CD8-positive, alpha-beta T cell (primary cell): ENCODE measurements at regions of chr16 and their contacts with region 1.

Region 1: GRCh38 chr16:31754998-31755615 is 118.5 kb upstream of the ZNF267 start:
- DNase-seq: no peak
- ATAC-seq: no peak
- H3K4me3 ChIP-seq: no peak overlapping the region
- H3K4me3 Mint-ChIP-seq: no peak overlapping the region
- H3K27ac ChIP-seq: no peak overlapping the region
- H3K27ac Mint-ChIP-seq: no peak overlapping the region
- H3K4me1 ChIP-seq: no peaks in the 10 kb centered on the region
- H3K4me1 Mint-ChIP-seq: no peaks in the 10 kb centered on the region
- H3K27me3 ChIP-seq: no peaks in the 10 kb centered on the region
- H3K27me3 Mint-ChIP-seq: no peaks in the 10 kb centered on the region
- CTCF ChIP-seq: no peak

Region 2: GRCh38 chr16:31916056-31916488 is 161.0 kb after region 1 on chr16:
- CTCF ChIA-PET with region 1: no interaction called
- POLR2A ChIA-PET with region 1: no interaction called
- intact Hi-C with region 1: loop called (anchors 10 kb)
- DNase-seq: no peak
- ATAC-seq: no peak
- H3K4me3 ChIP-seq: peak overlapping the region in 1 of 2 experiments; percentile 11
- H3K4me3 Mint-ChIP-seq: no peak overlapping the region
- H3K27ac ChIP-seq: no peak overlapping the region
- H3K27ac Mint-ChIP-seq: no peak overlapping the region
- H3K4me1 ChIP-seq: no peaks in the 10 kb centered on the region
- H3K4me1 Mint-ChIP-seq: peaks cover 3% of the 10 kb centered on the region
- H3K27me3 ChIP-seq: no peaks in the 10 kb centered on the region
- H3K27me3 Mint-ChIP-seq: no peaks in the 10 kb centered on the region
- CTCF ChIP-seq: no peak